Sigmoid colon (tissue), 7 donors: ENCODE measurements at regions of chr11 and their contacts with region 1.

Region 1: GRCh38 chr11:78809931-78810541 is 235.4 kb upstream of the NARS2 start:
- DNase-seq: no peak
- H3K4me3 ChIP-seq: no peak overlapping the region
- H3K27ac ChIP-seq: peak overlapping the region; percentile 76 to 86 (median 84)
- H3K4me1 ChIP-seq: peaks cover 0 to 58% (median 44%) of the 10 kb centered on the region in 4 donors
- H3K27me3 ChIP-seq: no peaks in the 10 kb centered on the region
- CTCF ChIP-seq: no peak
- EP300 ChIP-seq: peak; percentile 15 to 69 (median 58)
- POLR2A ChIP-seq: no peak

Region 2: DNA sequence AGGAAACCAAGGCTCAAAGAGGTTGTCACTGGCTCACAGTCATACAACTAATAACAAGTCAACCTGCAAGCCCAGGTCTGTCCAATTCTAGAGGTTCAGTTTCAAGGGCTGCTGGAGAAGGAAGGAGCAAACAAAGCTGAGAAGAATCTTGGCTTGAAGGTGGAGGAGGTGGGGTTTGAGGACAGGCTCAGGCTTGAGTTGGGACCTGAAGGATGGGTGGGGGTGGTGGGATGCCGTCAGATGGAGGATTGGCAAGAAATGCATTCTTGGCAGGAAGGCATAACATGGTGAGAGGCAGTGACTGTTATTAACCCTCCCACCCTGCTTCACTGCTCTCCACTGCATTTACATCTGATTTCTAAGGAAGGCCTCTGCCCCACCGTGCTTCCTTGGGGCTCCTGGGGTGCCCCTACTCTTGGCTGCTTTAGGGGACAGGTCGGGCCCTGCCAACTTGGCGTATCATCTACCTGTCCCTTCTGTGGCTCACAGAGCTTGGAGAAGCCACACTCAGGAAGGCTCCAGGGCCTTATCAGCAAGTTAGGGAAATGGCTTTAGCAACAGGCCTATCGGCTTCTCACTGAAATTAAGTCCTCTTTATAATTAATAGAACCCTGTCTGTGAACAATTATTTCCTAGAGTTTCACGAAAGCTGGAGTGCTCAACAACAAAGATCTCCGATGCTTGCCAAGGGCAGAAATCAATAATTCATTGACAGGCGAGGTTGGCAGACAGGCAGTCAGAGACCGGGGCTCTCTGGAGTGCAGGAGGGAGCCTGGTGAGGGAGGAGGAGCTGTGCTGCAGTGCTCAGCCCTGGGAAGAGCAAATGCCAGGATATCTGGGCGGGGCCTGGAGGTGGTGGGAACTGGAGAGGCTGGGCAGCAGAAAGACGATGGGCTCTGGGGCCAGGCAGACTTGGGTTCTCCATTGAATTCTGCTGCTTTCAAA is 150.4 kb before region 1 on chr11:
- intact Hi-C with region 1: no loop called
- DNase-seq: no peak
- H3K4me3 ChIP-seq: no peak overlapping the region
- H3K27ac ChIP-seq: no peak overlapping the region
- H3K4me1 ChIP-seq: no peaks in the 10 kb centered on the region
- H3K27me3 ChIP-seq: no peaks in the 10 kb centered on the region
- CTCF ChIP-seq: no peak
- EP300 ChIP-seq: no peak
- POLR2A ChIP-seq: no peak

Region 3: DNA sequence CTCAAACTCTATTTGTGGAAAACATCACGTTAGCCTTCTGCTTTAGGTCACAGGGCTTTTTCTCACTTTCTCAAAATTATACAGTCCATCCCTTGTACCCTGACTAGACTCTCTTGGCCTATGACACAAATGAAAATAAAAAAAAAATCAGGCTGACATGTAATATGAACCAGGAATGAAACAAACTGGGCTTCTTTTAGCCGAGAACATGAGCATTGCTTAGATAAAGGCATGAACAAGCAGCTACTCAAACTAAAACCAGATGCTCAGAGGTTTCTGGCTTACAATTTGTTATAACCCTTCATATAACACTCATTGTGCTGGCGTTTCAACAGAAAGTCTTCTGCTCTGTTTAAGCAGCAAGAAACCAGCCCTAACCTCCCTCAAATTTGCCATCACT is 30.2 kb after region 1 on chr11:
- intact Hi-C with region 1: loop called (anchors 2 kb)
- DNase-seq: no peak
- H3K4me3 ChIP-seq: no peak overlapping the region
- H3K27ac ChIP-seq: peak overlapping the region; percentile 64 to 77 (median 72)
- H3K4me1 ChIP-seq: peaks cover 0 to 23% (median 21%) of the 10 kb centered on the region in 4 donors
- H3K27me3 ChIP-seq: no peaks in the 10 kb centered on the region
- CTCF ChIP-seq: no peak
- EP300 ChIP-seq: no peak
- POLR2A ChIP-seq: no peak

Region 4: GRCh38 chr11:79113054-79113690 is 303.1 kb after region 1 on chr11:
- intact Hi-C with region 1: no loop called
- DNase-seq: no peak
- H3K4me3 ChIP-seq: no peak overlapping the region
- H3K27ac ChIP-seq: no peak overlapping the region
- H3K4me1 ChIP-seq: no peaks in the 10 kb centered on the region
- H3K27me3 ChIP-seq: no peaks in the 10 kb centered on the region
- CTCF ChIP-seq: no peak
- EP300 ChIP-seq: no peak
- POLR2A ChIP-seq: no peak